Motor neuron (in vitro differentiated cells): ENCODE measurements at regions of chr11 and their contacts with region 1.

Region 1: DNA sequence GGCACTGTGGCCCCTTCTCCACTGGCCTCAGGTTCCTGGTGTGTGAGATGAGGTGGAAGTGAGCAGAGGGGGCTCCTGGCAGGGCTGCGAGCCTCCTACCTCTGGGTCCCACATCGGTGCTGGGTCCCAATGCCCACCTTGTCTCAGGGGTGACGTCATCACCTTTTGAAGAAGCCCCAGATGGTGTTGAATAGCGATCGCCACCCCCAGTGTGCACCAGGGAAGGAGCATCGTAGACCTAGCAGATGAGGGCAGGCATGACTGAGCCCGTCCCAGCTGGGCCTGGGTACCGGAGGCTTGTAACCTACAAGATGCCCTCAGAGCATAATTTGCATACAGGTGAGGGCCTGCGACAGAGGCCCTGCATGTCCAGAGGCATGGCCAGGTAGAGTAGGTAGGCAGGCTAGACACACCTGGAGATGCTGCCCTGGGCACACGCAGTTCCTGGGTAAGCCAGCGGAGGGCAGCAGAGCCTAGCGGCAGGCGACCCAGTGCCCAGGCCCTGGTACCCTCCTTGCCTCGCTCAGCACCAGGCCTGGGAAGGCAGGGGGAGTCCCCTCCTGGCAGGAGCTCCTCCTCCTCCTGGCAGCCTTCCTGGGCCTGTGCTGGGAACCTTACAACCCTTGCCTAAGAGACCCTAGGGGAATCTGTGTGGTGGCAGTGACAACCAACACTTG is 52.5 kb downstream of the TPCN2 start:
- ATAC-seq: peak; percentile 73 to 90 (median 83)
- H3K4me3 ChIP-seq: no peak overlapping the region
- H3K27ac ChIP-seq: no peak overlapping the region
- H3K4me1 ChIP-seq: peaks cover 4% of the 10 kb centered on the region in 2 donors

Region 2: DNA sequence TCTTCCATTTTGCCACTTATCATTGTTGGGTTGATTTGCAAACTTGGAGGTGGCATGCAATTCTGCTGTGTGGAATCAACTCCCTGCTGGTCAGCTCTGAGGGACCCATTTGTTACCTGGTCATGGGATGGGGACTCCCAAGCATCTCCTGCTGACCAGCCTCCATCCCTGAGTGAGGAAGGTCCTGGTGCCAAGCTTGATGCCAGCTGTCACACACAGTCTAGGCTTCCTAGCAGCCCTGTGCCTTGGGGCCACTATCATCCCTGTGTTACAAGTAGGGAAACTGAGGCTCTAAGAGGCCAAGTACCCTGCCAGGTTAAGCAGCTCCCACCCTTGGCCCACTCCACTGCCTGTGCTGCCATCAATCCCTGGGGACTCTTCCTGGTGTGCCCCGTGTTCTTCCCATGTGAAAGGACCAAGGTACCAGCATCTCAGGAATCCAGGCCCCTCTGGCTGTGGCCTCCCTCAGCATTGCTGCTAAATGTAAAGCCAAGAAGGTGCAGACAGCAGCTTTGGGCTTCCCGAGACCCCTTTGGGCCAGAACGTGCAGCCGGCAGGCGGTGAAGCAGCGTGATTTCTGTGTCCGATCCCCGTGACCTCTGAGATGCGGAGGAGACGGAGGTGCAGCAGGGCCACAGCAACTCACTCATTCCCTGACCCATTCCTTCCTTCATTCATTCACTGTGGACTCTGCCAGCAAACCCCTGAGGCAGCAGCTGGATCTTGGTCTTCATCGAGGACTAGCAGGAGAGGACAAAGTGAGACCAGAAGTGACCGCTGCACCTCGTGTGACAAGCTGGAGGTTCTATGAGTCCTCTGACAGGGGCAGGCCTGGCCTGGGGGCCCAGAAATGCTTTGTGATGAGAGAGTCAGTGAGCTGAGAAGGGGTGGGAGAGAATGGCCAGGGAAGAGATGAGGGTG is 242.4 kb after region 1 on chr11:
- in situ Hi-C with region 1: no loop called
- ATAC-seq: no peak
- H3K4me3 ChIP-seq: no peak overlapping the region
- H3K27ac ChIP-seq: no peak overlapping the region
- H3K4me1 ChIP-seq: no peaks in the 10 kb centered on the region

Region 3: GRCh38 chr11:69443138-69443967 is 342.1 kb after region 1 on chr11:
- in situ Hi-C with region 1: loop called in 2 of 9 experiments (anchors 25 kb)
- ATAC-seq: peak; percentile 92 to 99 (median 94)
- H3K4me3 ChIP-seq: peak overlapping the region; percentile 22 to 36 (median 31)
- H3K27ac ChIP-seq: peak overlapping the region; percentile 49 to 67
- H3K4me1 ChIP-seq: peaks cover 13 to 20% of the 10 kb centered on the region in 2 donors

Region 4: DNA sequence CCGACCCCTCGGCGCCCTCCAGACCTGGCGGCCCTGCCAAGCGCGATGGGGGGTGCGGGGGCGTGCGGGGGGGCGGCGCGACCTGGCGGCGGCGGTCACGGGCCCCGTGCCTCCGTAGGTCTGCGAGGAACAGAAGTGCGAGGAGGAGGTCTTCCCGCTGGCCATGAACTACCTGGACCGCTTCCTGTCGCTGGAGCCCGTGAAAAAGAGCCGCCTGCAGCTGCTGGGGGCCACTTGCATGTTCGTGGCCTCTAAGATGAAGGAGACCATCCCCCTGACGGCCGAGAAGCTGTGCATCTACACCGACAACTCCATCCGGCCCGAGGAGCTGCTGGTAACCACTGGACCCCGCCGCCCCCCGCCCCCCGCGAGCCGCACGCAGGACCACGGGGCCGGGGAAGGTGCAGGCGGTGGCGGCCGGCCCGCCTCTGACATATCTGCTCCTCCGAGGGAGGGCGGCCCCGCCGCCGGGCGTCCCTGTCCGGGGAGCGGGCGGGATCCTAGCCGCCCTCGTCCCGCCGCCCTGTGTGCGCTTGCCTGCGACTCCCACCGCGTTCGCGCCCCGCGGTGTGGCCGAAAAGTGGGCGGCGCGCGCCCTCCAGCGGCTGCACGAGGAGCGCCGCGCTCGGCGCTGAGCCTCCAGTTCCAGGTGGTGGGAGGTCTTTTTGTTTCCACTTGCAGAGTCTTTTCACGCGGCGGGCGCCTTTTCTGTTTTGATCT is 541.8 kb after region 1 on chr11:
- in situ Hi-C with region 1: loop called in 3 of 9 experiments (anchors 5 to 10 kb)
- ATAC-seq: peak; percentile 4 to 70 (median 59)
- H3K4me3 ChIP-seq: peak overlapping the region; percentile 31 to 46 (median 41)
- H3K27ac ChIP-seq: no peak overlapping the region
- H3K4me1 ChIP-seq: peaks cover 35 to 50% of the 10 kb centered on the region in 2 donors

Region 5: DNA sequence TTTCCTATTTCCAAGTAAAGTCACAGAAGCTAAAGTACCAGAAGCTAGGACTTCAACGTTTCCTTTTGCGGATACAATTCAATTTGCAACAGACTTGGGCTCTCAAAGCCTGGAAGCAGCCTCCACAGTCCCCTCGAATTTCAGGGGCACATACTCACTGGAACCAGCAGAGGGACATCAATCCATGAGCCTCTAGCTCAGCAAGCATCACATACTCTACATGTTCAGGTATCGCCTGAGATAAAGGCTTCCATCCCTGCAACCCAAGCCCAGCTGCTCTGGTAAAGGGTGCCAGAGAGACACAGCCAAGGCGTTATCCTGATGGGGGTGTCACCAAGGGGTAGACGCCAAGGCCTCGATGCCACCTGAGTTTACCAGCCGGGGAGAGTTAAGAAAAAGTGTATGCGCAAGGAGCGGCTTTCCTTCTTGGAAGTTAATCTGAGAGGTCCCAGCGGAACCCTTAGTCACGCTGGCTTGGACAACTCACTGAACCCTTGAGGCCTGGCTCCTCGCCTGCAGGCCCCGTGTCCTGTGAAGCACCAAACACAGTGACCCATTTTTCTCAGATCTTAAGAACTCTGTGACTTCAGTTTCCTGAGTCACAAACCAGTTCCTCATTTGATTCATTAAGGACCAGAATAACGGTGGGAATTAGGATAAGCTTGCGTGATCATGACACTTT is 560.9 kb after region 1 on chr11:
- in situ Hi-C with region 1: loop called in 6 of 9 experiments (anchors 10 to 25 kb)
- ATAC-seq: no peak
- H3K4me3 ChIP-seq: no peak overlapping the region
- H3K27ac ChIP-seq: no peak overlapping the region
- H3K4me1 ChIP-seq: peaks cover 12 to 21% of the 10 kb centered on the region in 2 donors

Region 6: GRCh38 chr11:69670158-69670845 is 569.0 kb after region 1 on chr11:
- in situ Hi-C with region 1: loop called in 6 of 9 experiments (anchors 10 to 25 kb)
- ATAC-seq: peak; percentile 10 to 65 (median 55)
- H3K4me3 ChIP-seq: no peak overlapping the region
- H3K27ac ChIP-seq: no peak overlapping the region
- H3K4me1 ChIP-seq: peaks cover 6 to 11% of the 10 kb centered on the region in 2 donors